Left ventricle myocardium superior (tissue), 1 donor: ENCODE measurements at regions of chr7 and their contacts with region 1.

Region 1: DNA sequence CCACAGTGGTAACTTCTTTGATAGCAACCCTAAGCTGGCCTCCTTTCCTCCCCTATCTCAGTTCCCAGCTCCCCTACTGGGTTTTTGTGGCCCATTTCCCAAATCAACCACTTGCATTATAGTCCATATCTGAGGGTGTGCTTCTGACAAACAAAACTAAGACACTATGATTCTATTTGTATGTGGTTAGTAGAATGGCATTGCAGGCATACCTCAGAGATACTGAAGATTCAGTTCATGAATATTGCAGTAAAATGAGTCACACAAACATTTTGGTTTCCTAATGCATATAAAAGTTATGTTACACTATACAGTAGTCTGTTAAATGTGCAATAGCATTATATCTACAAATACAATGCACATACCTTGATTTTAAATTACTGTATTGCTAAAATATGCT is 15.4 kb upstream of the TMEM243 start:
- DNase-seq: no peak
- ATAC-seq: no peak

Region 2: GRCh38 chr7:86920154-86920553 is 314.8 kb before region 1 on chr7:
- intact Hi-C with region 1: loop called (anchors 5 kb)
- DNase-seq: no peak
- ATAC-seq: no peak

Region 3: GRCh38 chr7:87435546-87435945 is 200.6 kb after region 1 on chr7:
- intact Hi-C with region 1: no loop called
- DNase-seq: no peak
- ATAC-seq: no peak